ENCODE measurements at regions of chr5 and their contacts with region 1.

Region 1: GRCh38 chr5:15105796-15106393 is 234.3 kb upstream of the ANKH start:
- DNase-seq: peak; percentile 50
- H3K4me3 Mint-ChIP-seq: no peak overlapping the region
- H3K27ac Mint-ChIP-seq: no peak overlapping the region
- H3K4me1 Mint-ChIP-seq: no peaks in the 10 kb centered on the region
- H3K27me3 Mint-ChIP-seq: peaks cover 9% of the 10 kb centered on the region
- CTCF ChIP-seq: peak; percentile 72

Region 2: DNA sequence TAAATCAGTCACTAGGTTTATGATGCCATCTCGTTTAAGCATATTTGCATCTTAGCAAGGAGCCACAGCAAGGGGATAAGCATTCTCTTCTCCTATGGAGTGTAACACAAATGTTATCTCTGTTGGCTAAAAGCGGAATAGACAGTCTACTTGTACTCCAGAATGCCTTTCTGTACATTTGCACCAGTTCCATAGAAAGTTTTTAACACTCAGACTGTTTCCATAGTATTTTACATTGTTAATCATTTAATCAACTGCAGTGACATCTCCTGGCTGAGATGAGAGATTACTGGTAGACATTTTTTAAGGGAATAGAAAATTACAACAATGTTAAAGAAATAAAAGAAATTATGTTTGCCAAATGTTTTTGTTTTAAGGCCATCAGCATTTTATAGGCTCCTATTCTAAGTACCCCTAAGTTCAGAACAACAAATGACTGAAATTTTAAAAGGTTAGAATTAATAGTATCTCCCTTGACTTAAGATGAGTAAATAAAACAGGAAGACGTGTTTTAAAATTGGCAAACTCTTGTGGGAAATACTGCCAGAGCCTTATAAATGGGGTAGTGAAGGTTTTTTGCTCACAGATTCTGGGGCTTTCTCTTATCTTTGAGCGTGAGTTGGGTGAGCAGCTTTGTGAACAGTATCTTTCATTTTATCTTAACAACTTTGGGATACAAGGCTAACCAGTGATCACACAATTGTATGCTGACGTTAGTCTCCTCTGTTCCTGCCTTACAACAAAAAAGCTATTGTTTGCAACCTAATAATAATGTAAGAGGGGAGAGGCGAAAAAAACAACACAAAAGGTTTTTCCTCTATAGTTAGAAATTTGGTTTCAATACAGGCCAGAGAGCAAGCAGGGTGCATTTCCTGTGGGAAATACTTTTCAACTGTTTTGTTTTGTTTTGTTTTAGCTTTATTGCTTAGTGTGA is 688.4 kb after region 1 on chr5:
- CTCF ChIA-PET with region 1: no interaction called
- intact Hi-C with region 1: loop called (anchors 10 kb)
- DNase-seq: no peak
- H3K4me3 Mint-ChIP-seq: no peak overlapping the region
- H3K27ac Mint-ChIP-seq: no peak overlapping the region
- H3K4me1 Mint-ChIP-seq: no peaks in the 10 kb centered on the region
- H3K27me3 Mint-ChIP-seq: no peaks in the 10 kb centered on the region
- CTCF ChIP-seq: no peak

Region 3: GRCh38 chr5:15995341-15996052 is 889.6 kb after region 1 on chr5:
- CTCF ChIA-PET with region 1: no interaction called
- intact Hi-C with region 1: loop called (anchors 5 kb)
- DNase-seq: no peak
- H3K4me3 Mint-ChIP-seq: no peak overlapping the region
- H3K27ac Mint-ChIP-seq: no peak overlapping the region
- H3K4me1 Mint-ChIP-seq: no peaks in the 10 kb centered on the region
- H3K27me3 Mint-ChIP-seq: no peaks in the 10 kb centered on the region
- CTCF ChIP-seq: no peak